PC-9 (cell line): ENCODE measurements at regions of chr2 and their contacts with region 1.

Region 1: GRCh38 chr2:64750817-64751285 is 97.1 kb upstream of the SERTAD2 start:
- DNase-seq: peak; percentile 98 to 99
- H3K4me3 ChIP-seq: peak overlapping the region; percentile 75
- H3K27ac ChIP-seq: peak overlapping the region; percentile 51
- H3K4me1 ChIP-seq: peaks cover 38% of the 10 kb centered on the region
- H3K27me3 ChIP-seq: no peaks in the 10 kb centered on the region
- CTCF ChIP-seq: no peak

Region 2: GRCh38 chr2:64273524-64274398 is 477.1 kb before region 1 on chr2:
- CTCF ChIA-PET with region 1: no interaction called
- POLR2A ChIA-PET with region 1: no interaction called
- intact Hi-C with region 1: loop called (anchors 10 kb)
- DNase-seq: peak; percentile 81 to 98
- H3K4me3 ChIP-seq: peak overlapping the region; percentile 42; the same call in 1 of the 2 replicates
- H3K27ac ChIP-seq: peak overlapping the region; percentile 93
- H3K4me1 ChIP-seq: peaks cover 69% of the 10 kb centered on the region
- H3K27me3 ChIP-seq: no peaks in the 10 kb centered on the region
- CTCF ChIP-seq: no peak

Region 3: GRCh38 chr2:64606479-64607363 is 144.1 kb before region 1 on chr2:
- CTCF ChIA-PET with region 1: interaction called, 3 read pairs
- POLR2A ChIA-PET with region 1: interaction called, 23 read pairs
- intact Hi-C with region 1: loop called (anchors 2 kb)
- DNase-seq: peak; percentile 80 to 98
- H3K4me3 ChIP-seq: no peak overlapping the region; the same call in 1 of the 2 replicates
- H3K27ac ChIP-seq: peak overlapping the region; percentile 92
- H3K4me1 ChIP-seq: peaks cover 43% of the 10 kb centered on the region
- H3K27me3 ChIP-seq: no peaks in the 10 kb centered on the region
- CTCF ChIP-seq: no peak

Region 4: DNA sequence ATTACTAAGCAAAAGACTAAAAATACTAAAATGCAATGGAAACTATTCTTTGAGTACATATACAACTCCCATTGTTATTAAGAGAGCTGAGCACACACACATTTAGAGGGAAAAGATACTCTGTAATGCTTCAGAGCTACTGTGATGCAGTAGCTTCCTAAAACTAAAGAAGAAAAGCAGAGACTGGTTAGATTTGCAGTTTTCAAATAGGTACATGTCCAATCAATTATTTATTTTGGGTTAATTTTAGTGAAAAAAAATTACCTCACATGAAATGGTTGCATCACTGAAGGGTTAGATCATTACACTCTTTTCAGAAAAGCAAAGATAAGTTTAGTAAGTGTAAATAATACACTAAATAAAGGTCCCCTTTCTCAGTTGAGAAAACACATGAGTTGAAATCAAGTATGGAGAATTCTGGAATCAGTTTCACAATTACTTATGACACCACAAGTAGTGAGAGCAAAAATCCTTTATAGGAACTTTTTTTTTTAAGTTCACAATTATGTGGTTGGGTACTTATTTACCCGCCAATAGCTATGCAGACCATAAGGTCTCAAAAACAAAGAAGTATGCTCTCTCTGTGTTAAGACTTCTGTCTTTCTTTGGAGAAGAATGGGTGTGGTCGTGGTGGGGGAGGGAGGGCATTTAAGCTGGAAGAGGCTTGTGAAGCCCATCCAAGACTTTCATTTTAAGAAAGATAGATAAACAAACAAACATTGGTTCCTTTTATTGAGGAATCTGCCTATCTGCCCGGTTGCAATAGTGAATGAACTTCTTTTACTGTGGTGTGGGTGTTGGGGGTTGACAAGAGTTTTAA is 71.9 kb before region 1 on chr2:
- CTCF ChIA-PET with region 1: no interaction called
- POLR2A ChIA-PET with region 1: interaction called, 20 read pairs
- intact Hi-C with region 1: no loop called
- DNase-seq: no peak
- H3K4me3 ChIP-seq: no peak overlapping the region
- H3K27ac ChIP-seq: no peak overlapping the region
- H3K4me1 ChIP-seq: peaks cover 12% of the 10 kb centered on the region
- H3K27me3 ChIP-seq: no peaks in the 10 kb centered on the region
- CTCF ChIP-seq: no peak

Region 5: GRCh38 chr2:64779117-64779690 is 28.4 kb after region 1 on chr2:
- CTCF ChIA-PET with region 1: interaction called, 3 read pairs
- POLR2A ChIA-PET with region 1: interaction called, 9 read pairs
- intact Hi-C with region 1: loop called (anchors 1 kb)
- DNase-seq: peak; percentile 71 to 99
- H3K4me3 ChIP-seq: no peak overlapping the region
- H3K27ac ChIP-seq: peak overlapping the region; percentile 60
- H3K4me1 ChIP-seq: peaks cover 62% of the 10 kb centered on the region
- H3K27me3 ChIP-seq: no peaks in the 10 kb centered on the region
- CTCF ChIP-seq: no peak

Region 6: DNA sequence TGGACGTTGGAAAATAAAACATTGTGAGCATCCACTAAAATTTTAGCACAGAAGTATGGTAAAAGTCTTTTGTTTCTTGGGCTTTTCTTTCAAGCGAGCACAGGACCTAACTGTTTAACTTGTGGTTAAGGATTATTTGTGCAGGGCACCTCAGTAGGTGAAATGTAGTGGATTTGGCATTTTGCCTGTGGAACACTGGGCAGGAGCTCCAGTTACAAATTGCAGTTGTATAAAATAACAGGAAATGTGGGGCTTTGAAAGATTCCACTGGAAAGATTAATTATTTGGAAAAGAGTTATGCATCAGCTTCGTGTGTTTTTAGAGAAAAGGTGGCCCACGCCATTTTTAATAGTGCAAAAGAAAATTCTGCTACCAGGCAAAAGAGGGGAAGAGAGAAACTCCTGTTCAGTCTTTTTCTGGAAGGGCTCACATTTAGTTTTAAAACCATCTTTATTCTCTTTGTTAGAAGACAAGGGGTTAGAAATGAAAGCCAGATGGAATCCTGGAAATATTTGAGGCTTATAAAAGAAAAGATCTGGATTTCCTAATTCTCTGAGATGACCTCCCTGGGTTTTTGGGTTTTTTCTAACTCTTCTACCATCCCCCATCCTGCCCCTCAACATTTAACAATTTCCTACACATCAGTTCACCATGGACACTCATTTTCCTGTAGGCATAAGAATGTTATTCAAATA is 47.2 kb after region 1 on chr2:
- CTCF ChIA-PET with region 1: no interaction called
- POLR2A ChIA-PET with region 1: interaction called, 8 read pairs
- intact Hi-C with region 1: loop called (anchors 2 kb)
- DNase-seq: peak; percentile 63 to 90
- H3K4me3 ChIP-seq: peak overlapping the region; percentile 12; the same call in 1 of the 2 replicates
- H3K27ac ChIP-seq: peak overlapping the region; percentile 30
- H3K4me1 ChIP-seq: peaks cover 63% of the 10 kb centered on the region
- H3K27me3 ChIP-seq: no peaks in the 10 kb centered on the region
- CTCF ChIP-seq: no peak

Region 7: DNA sequence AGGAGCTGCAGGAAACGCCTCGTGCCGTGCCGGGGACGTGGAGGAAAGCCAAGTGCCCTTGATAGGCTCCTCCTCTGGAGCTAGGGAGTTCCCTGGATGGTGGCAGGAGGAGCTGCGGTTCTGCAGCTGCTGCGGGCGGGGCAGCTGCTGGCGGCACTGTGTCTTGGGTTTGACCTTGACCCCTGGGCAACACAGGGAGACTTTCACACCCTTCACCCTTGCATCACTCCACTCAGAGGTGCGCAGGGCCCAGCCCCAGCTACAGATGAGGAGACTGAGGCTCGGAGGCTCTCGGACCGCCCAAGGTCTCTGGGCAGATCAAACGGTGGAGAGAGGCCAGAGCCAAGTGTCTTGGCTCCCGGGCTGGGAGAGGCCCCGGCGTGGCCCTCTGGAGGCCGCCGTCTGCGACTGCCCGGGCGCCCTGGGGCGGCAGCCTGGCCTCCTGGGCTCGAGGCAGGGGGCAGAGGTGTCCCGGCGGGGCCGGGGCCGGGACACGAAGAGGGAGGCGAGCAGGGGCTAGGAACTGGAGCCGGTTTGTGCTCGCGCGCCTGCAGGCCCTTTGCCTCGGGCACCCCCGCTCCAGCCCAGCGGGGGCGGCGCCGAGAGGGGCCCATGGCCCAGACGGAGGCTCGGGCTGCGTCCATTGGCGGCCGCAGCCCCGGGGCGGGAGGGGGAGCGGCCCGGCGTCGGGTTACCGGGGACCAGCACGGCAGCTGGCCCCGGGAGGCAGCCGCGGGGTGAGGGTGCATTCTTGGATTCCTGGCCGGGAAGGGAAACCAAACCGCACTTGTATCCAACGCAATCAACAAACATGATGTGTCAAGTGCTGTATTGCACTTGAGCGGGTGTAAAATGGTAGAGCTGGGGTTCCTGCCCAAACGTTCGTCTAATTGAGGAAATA is 108.7 kb after region 1 on chr2:
- CTCF ChIA-PET with region 1: no interaction called
- POLR2A ChIA-PET with region 1: interaction called, 38 read pairs
- intact Hi-C with region 1: loop called (anchors 1 kb)
- DNase-seq: peak; percentile 91 to 94
- H3K4me3 ChIP-seq: peak overlapping the region; percentile 49
- H3K27ac ChIP-seq: peak overlapping the region; percentile 86
- H3K4me1 ChIP-seq: peaks cover 62% of the 10 kb centered on the region
- H3K27me3 ChIP-seq: no peaks in the 10 kb centered on the region
- CTCF ChIP-seq: no peak; the same call in 1 of the 2 replicates